Sciatic nerve (tissue), 2 donors: ENCODE measurements at regions of chr5 and their contacts with region 1.

Region 1: GRCh38 chr5:154072414-154073171 is 33.8 kb downstream of the MFAP3 start:
- DNase-seq: peak; percentile 93
- ATAC-seq: peak; percentile 97

Region 2: GRCh38 chr5:154002093-154002492 is 70.5 kb before region 1 on chr5:
- intact Hi-C with region 1: no loop called
- DNase-seq: no peak
- ATAC-seq: no peak

Region 3: DNA sequence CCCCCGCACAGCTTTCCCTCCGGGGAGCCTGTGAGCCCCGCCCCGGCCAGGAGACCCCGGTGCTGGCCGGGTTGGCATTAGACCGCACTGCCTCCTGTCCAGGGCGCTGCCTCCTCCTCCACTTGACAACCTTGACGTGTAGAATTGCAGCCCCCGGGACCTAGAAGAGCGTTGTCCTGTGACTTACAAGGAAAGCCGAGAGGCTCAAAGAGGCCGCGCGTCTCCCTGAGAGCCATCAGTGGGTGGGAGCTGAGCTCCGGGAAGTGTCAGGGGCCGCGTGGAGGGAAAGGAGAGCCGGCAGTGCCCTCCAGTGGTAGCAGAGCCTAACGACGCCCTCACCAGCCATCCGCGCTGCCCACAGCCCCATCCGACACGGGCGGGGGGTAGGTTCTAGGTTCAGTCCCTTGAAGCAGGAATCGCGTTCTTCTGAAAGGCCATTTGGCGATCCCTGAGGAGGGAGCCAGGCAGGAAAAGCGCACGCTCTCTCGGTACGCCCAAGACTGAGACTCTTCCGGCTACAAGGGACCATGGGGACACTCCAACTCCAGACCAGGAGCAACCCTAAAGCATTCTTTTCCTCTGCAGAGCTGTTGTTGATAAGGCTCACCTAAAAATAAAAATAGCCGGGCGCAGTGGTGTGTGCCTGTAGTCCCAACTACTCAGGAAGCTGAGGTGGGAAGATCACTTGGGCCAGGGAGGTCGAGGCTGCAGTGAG is 332.6 kb after region 1 on chr5:
- intact Hi-C with region 1: loop called (anchors 5 kb)
- DNase-seq: peak; percentile 88
- ATAC-seq: peak; percentile 98